HEK293 (cell line): ENCODE measurements at regions of chr10 and their contacts with region 1.

Region 1: DNA sequence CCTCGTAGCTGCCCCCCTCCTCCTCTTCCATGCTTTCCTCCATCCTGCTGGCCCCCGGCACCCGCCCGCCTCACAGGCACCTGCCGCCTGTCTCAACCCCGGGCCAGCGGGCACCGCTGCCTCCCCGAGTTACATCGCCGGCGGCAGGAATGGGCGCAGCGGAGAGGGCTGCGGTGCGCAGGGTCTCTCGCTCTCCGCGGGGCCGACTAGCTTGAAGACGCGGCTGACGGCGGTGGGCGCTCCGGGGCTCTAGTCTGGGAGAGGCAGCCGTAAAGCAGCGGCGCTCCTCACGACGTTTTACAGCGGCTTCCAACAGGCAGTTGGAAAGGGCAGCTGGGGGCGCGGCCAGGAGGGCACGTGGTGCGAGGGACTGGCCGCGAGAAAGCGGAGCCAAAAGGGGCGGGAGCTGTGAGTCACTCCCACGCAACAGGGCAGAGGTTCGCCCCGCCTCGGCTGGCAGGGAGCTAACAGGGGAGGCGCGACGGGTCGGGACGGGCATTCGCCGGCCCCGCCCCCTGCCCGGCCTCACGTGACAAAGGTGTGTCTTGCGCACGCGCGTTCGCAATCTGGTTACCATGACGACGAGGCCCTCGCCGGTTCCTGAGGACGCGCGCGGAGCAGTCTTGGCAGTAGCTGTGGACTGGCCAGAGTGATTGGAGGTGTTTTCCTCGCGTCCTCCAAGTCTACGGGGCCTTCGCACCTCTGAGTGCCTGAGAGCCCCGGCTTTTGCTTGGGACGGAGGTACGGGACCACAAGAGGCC is at the start of gene CACUL1:
- H3K4me3 ChIP-seq: peak within 1 kb of the TSS; percentile 93
- H3K27ac ChIP-seq: peak within 1 kb of the TSS; percentile 88
- H3K4me1 ChIP-seq: peaks cover 13% of the 10 kb centered on the region; the same call in 1 of the 2 replicates
- CTCF ChIP-seq: no peak

Region 2: GRCh38 chr10:118193642-118194041 is 561.3 kb before region 1 on chr10:
- CTCF ChIA-PET with region 1: no interaction called
- POLR2A ChIA-PET with region 1: no interaction called
- H3K4me3 ChIP-seq: no peak overlapping the region
- H3K27ac ChIP-seq: no peak overlapping the region
- H3K4me1 ChIP-seq: no peaks in the 10 kb centered on the region
- CTCF ChIP-seq: no peak

Region 3: GRCh38 chr10:118732245-118733165 is 22.4 kb before region 1 on chr10:
- CTCF ChIA-PET with region 1: interaction called, 9 read pairs
- POLR2A ChIA-PET with region 1: interaction called, 11 read pairs
- H3K4me3 ChIP-seq: no peak overlapping the region
- H3K27ac ChIP-seq: no peak overlapping the region
- H3K4me1 ChIP-seq: peaks cover 51% of the 10 kb centered on the region
- CTCF ChIP-seq: no peak

Region 4: DNA sequence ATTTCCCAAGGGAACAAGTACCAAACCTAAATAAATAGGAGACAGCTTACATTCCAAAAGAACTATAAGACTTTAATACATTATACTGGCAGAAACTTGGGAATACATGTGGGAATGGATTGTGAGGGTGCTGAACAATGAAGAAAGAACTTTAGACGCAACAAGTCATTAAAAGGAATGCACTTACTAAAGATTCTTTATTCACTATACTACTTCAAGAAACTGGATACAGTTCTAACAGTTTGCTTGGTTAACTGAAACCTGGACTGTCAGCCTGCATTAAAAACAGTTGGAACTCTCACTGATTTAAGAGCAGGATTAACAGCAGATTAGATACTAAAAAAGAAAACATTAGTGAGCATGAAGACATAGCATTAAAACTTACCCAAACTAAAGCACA is 12.1 kb before region 1 on chr10:
- CTCF ChIA-PET with region 1: interaction called, 9 read pairs
- POLR2A ChIA-PET with region 1: interaction called, 27 read pairs
- H3K4me3 ChIP-seq: no peak overlapping the region
- H3K27ac ChIP-seq: no peak overlapping the region
- H3K4me1 ChIP-seq: peaks cover 28% of the 10 kb centered on the region
- CTCF ChIP-seq: no peak

Region 5: DNA sequence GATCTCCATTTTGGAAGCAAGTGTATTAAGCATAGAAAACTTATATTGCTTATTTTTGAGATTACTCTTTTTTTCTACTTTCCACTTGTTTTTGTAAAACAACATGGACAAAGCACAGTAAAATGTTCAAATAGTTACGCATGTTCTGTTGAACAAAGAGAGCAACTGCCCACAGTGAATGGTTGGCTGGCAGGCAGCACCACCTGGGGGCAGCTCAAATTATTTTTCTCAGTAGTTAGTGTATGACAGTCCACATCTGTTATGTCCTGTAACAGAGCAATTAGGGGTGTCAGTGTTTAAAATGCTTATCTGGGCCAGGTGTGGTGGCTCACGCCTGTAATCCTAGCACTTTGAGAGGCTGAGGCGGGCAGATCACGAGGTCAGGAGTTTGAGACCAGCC is 46.0 kb after region 1 on chr10:
- CTCF ChIA-PET with region 1: interaction called, 8 read pairs
- POLR2A ChIA-PET with region 1: interaction called, 10 read pairs
- H3K4me3 ChIP-seq: no peak overlapping the region
- H3K27ac ChIP-seq: no peak overlapping the region
- H3K4me1 ChIP-seq: no peaks in the 10 kb centered on the region
- CTCF ChIP-seq: peak; percentile 50; the same call in 1 of the 2 replicates

Region 6: GRCh38 chr10:119028900-119029612 is 274.2 kb after region 1 on chr10:
- CTCF ChIA-PET with region 1: no interaction called
- POLR2A ChIA-PET with region 1: interaction called, 15 read pairs
- H3K4me3 ChIP-seq: no peak overlapping the region
- H3K27ac ChIP-seq: no peak overlapping the region
- H3K4me1 ChIP-seq: peaks cover 10% of the 10 kb centered on the region
- CTCF ChIP-seq: no peak